Posterior vena cava (tissue), 2 donors: ENCODE measurements at regions of chr1 and their contacts with region 1.

Region 1: DNA sequence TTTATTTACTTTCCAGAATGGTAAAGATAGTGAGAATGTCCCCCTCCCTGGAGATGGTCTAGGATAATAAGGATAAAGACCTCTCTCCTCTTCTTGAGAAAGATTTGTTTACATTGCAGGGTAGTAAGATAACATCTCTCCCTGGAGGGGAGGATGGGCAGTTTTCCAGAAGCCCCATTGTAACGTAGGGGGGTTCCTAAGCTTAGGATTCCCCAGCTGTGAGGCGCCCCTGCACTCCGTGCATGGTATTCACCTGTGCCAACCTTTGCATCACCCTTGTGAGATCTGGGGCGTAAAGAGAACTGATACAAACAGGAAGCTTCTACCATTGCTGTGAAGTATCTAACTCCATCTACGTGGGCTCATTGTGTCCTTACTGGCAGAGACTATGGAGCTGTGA is 148.7 kb upstream of the DNAH14 start:
- DNase-seq: no peak

Region 2: GRCh38 chr1:224805889-224806288 is 25.2 kb after region 1 on chr1:
- intact Hi-C with region 1: loop called in 1 of 2 experiments (anchors 1 kb)
- DNase-seq: no peak

Region 3: DNA sequence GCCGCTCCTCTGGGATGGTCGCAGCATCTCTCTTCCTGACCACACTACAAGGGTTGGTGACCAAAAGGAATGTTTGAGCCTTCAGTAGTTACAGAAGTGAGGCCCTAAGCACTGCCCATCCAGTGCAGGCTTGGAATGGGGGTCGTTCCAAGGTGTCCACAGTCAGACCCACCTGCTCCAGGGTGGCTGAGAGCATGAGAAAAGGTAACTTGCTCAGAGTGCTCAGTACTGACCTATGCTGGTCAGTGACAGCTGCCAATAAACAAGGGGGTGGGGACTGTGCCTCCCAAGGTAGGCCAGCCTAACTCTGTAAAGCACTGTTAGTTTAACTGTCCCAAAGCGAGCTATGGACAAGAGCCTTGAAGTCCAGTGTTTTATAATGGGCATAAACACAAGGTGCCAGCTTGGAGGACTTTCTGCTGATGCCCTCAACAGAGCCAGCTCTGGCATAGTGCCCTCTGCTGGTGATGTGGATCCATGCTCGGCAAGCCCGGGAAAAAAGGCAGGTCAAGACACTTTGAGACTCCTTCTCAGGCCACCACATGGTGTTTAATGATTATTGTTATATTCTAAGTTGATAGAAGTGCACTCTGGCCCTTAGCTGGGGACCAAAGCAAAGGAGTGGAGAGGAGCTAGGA is 70.6 kb after region 1 on chr1:
- intact Hi-C with region 1: no loop called
- DNase-seq: peak; percentile 83